Activated B cell treated with CpG ODN at 0.5 μM for 24 hours (primary cell): ENCODE measurements at regions of chr2 and their contacts with region 1.

Region 1: DNA sequence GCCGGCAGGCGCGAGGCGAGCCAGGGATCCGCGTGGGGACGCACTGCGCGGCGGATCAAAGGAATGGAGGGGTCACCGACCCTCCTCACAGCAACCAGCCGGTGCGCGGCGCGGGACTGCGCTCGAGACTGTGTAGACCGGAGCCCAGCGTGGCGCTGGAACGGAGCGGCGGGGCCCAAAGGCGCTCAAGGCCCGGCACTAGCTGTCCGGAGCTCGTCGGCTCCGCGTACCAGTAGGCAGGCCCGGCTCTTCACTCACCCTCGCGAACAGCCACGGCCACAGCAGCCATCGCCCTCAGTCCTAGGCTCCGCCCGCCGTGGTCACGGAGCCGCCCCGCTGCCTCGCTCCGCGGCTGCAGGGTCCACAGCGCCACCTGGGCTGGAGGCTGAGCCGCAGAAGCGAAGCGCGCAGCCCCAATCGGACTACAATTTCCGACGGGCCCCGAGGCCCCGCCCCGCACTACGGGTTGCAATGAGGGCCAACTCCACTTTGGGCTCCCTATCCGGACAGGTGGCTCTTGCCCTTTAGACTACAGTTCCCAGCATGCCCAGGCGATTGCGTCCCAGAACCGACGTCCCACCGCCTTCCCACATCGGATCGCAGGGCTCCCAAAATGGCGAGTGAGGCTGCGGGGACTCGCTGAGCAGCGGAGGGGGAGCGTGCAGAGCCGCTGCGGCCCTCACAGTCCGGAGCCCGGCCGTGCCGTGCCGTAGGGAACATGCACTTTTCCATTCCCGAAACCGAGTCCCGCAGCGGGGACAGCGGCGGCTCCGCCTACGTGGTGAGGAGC is at the starts of genes EIF2B4 and SNX17:
- DNase-seq: peak; percentile 99
- ATAC-seq: peak; percentile 83
- H3K4me3 Mint-ChIP-seq: peak within 1 kb of the TSS; percentile 94
- H3K27ac Mint-ChIP-seq: peak within 1 kb of the TSS; percentile 98
- H3K4me1 Mint-ChIP-seq: peaks cover 35% of the 10 kb centered on the region
- H3K27me3 Mint-ChIP-seq: no peaks in the 10 kb centered on the region
- CTCF ChIP-seq: no peak
- total RNA-seq, gene EIF2B4: 43.3 and 49.9 TPM in 2 replicates
- total RNA-seq, gene SNX17: 124 and 128 TPM in 2 replicates

Region 2: GRCh38 chr2:27086090-27086723 is 284.0 kb before region 1 on chr2:
- CTCF ChIA-PET with region 1: interaction called, 3 read pairs
- POLR2A ChIA-PET with region 1: interaction called, 3 read pairs
- intact Hi-C with region 1: loop called (anchors 1 kb)
- DNase-seq: peak; percentile 99
- ATAC-seq: peak; percentile 92
- H3K4me3 Mint-ChIP-seq: peak overlapping the region; percentile 87
- H3K27ac Mint-ChIP-seq: peak overlapping the region; percentile 86
- H3K4me1 Mint-ChIP-seq: peaks cover 18% of the 10 kb centered on the region
- H3K27me3 Mint-ChIP-seq: no peaks in the 10 kb centered on the region
- CTCF ChIP-seq: peak; percentile 44

Region 3: GRCh38 chr2:27322766-27323595 is 47.2 kb before region 1 on chr2 and contains the start of gene MPV17:
- CTCF ChIA-PET with region 1: no interaction called
- POLR2A ChIA-PET with region 1: interaction called, 26 read pairs
- intact Hi-C with region 1: loop called (anchors 1 kb)
- DNase-seq: peak; percentile 79
- ATAC-seq: peak; percentile 95
- H3K4me3 Mint-ChIP-seq: peak within 1 kb of the TSS; percentile 99
- H3K27ac Mint-ChIP-seq: peak within 1 kb of the TSS; percentile 96
- H3K4me1 Mint-ChIP-seq: peaks cover 25% of the 10 kb centered on the region
- H3K27me3 Mint-ChIP-seq: no peaks in the 10 kb centered on the region
- CTCF ChIP-seq: no peak
- total RNA-seq, gene MPV17: 78.1 and 98.3 TPM in 2 replicates

Region 4: DNA sequence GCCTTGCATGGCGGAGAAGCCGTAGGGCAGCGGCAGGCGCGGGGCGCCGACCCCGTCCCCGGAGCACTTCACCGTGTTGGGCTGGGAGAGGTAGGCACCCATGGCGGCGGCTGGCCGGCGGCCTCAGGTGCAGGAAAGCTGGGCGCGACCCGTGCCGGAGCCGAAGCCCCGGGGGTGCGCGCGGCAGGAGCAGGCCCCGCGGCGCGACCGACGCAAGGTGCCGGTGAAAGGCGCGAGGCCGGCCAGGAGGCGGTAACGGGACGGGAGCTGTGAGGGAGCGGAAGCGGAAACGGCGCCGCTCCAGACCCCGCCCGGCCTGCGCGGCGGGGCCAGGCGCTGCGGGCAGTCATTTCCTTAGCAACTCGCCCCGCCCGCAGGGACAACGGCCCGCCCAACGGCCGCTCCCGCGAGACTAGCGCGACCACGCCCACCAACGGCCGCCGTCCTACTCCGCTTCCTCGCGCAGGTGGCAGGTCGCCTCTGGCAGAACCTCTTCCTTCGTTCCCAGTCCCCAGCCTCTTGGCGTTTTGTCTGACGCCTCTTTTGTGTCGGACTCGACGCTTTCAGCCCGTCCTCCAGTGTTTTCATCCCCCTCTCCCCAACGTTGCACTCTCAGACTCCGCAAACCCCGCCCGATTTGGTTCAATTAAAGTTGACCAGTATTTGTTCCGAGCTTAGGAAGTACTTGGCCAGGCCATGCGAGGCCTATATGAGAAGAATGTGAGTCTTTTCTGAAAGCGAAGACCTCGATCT is 39.3 kb after region 1 on chr2 and contains the start of gene PPM1G:
- CTCF ChIA-PET with region 1: no interaction called
- POLR2A ChIA-PET with region 1: interaction called, 58 read pairs
- intact Hi-C with region 1: loop called (anchors 1 kb)
- DNase-seq: peak; percentile 98
- ATAC-seq: peak; percentile 96
- H3K4me3 Mint-ChIP-seq: peak within 1 kb of the TSS; percentile 87
- H3K27ac Mint-ChIP-seq: peak within 1 kb of the TSS; percentile 95
- H3K4me1 Mint-ChIP-seq: peaks cover 31% of the 10 kb centered on the region
- H3K27me3 Mint-ChIP-seq: no peaks in the 10 kb centered on the region
- CTCF ChIP-seq: no peak
- total RNA-seq, gene PPM1G: 74.7 and 75.2 TPM in 2 replicates

Region 5: GRCh38 chr2:27489498-27490397 is 119.5 kb after region 1 on chr2 and contains the start of gene IFT172:
- CTCF ChIA-PET with region 1: no interaction called
- POLR2A ChIA-PET with region 1: no interaction called
- intact Hi-C with region 1: loop called (anchors 1 kb)
- DNase-seq: peak; percentile 92
- ATAC-seq: peak; percentile 96
- H3K4me3 Mint-ChIP-seq: peak within 1 kb of the TSS; percentile 86
- H3K27ac Mint-ChIP-seq: peak within 1 kb of the TSS; percentile 79
- H3K4me1 Mint-ChIP-seq: peaks cover 26% of the 10 kb centered on the region
- H3K27me3 Mint-ChIP-seq: peaks cover 19% of the 10 kb centered on the region
- CTCF ChIP-seq: no peak
- total RNA-seq, gene IFT172: 12.7 and 14.4 TPM in 2 replicates

Region 6: DNA sequence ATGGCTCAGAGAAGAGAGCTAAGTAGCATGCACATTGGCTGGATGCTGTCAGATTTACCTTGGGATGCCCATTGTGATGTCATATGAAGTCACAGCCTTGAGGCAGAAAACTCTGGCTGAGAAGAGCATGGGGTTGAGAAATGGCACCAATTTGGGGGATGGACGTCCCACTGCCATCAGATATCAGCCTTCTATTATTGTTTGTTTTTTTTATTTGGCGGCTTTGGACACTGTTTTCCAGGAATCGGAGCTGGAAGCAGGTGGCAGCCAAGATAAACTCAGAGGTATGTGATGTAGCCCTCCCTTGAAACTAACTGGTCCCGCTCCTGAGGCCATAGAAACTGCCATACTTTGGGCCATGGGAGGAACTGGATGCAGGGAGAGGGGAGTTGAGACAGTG is 167.1 kb after region 1 on chr2:
- CTCF ChIA-PET with region 1: no interaction called
- POLR2A ChIA-PET with region 1: no interaction called
- intact Hi-C with region 1: no loop called
- DNase-seq: no peak
- ATAC-seq: no peak
- H3K4me3 Mint-ChIP-seq: no peak overlapping the region
- H3K27ac Mint-ChIP-seq: no peak overlapping the region
- H3K4me1 Mint-ChIP-seq: no peaks in the 10 kb centered on the region
- H3K27me3 Mint-ChIP-seq: peaks cover 5% of the 10 kb centered on the region
- CTCF ChIP-seq: no peak

Region 7: GRCh38 chr2:27566628-27567027 is 196.4 kb after region 1 on chr2:
- CTCF ChIA-PET with region 1: no interaction called
- POLR2A ChIA-PET with region 1: no interaction called
- intact Hi-C with region 1: no loop called
- DNase-seq: no peak
- ATAC-seq: no peak
- H3K4me3 Mint-ChIP-seq: no peak overlapping the region
- H3K27ac Mint-ChIP-seq: no peak overlapping the region
- H3K4me1 Mint-ChIP-seq: no peaks in the 10 kb centered on the region
- H3K27me3 Mint-ChIP-seq: peaks cover 47% of the 10 kb centered on the region
- CTCF ChIP-seq: no peak

Region 8: DNA sequence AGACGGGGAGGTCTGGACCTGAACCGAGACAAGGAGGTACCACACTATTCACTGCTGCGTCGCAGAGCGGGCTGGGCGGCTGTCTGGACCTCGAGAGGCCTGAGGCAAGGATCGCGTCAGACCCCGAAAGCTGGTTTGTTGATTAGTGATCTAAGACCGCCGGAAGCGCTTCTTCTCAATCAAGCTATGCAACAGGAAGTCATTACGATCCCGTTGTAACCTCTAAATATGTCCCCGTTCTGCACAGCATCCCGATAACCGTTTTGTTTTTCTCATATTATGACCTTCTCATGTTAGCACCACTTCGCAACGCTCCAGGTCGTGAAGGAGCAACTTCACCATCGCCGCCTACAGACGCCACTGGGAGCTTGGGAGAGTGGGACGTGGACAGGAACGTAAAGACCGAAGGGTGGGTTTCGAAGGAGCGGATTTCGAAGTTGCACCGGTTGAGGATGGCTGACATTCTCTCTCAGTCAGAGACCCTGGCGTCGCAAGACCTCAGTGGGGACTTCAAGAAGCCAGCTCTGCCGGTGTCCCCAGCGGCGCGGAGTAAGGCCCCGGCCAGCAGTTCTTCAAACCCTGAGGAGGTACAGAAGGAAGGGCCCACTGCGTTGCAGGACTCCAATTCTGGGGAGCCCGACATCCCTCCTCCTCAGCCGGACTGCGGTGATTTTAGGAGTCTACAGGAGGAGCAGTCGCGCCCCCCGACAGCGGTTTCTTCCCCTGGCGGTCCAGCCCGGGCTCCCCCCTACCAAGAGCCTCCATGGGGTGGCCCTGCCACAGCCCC is 293.4 kb after region 1 on chr2 and contains the starts of genes SLC4A1AP and SUPT7L:
- CTCF ChIA-PET with region 1: no interaction called
- POLR2A ChIA-PET with region 1: interaction called, 6 read pairs
- intact Hi-C with region 1: loop called (anchors 1 kb)
- DNase-seq: peak; percentile 72
- ATAC-seq: peak; percentile 81
- H3K4me3 Mint-ChIP-seq: peak within 1 kb of the TSS; percentile 100
- H3K27ac Mint-ChIP-seq: peak within 1 kb of the TSS; percentile 99
- H3K4me1 Mint-ChIP-seq: peaks cover 46% of the 10 kb centered on the region
- H3K27me3 Mint-ChIP-seq: no peaks in the 10 kb centered on the region
- CTCF ChIP-seq: no peak
- total RNA-seq, gene SLC4A1AP: 21.4 and 22.0 TPM in 2 replicates
- total RNA-seq, gene SUPT7L: 28.1 and 30.9 TPM in 2 replicates

Region 9: GRCh38 chr2:28142386-28142785 is 772.2 kb after region 1 on chr2:
- CTCF ChIA-PET with region 1: no interaction called
- POLR2A ChIA-PET with region 1: no interaction called
- intact Hi-C with region 1: no loop called
- DNase-seq: no peak
- ATAC-seq: no peak
- H3K4me3 Mint-ChIP-seq: no peak overlapping the region
- H3K27ac Mint-ChIP-seq: no peak overlapping the region
- H3K4me1 Mint-ChIP-seq: no peaks in the 10 kb centered on the region
- H3K27me3 Mint-ChIP-seq: no peaks in the 10 kb centered on the region
- CTCF ChIP-seq: no peak